ENCODE measurements at regions of chr22 and their contacts with region 1.

Region 1: GRCh38 chr22:37862570-37863325 is 13.5 kb downstream of the EIF3L start:
- DNase-seq: no peak
- ATAC-seq: no peak
- H3K4me3 ChIP-seq: no peak overlapping the region
- H3K27ac ChIP-seq: no peak overlapping the region
- H3K4me1 ChIP-seq: no peaks in the 10 kb centered on the region
- H3K27me3 ChIP-seq: no peaks in the 10 kb centered on the region
- CTCF ChIP-seq: no peak

Region 2: GRCh38 chr22:37726241-37726887 is 136.4 kb before region 1 on chr22:
- CTCF ChIA-PET with region 1: no interaction called
- POLR2A ChIA-PET with region 1: no interaction called
- intact Hi-C with region 1: no loop called
- DNase-seq: no peak
- ATAC-seq: no peak; the same call in 1 of the 2 replicates
- H3K4me3 ChIP-seq: no peak overlapping the region
- H3K27ac ChIP-seq: no peak overlapping the region
- H3K4me1 ChIP-seq: no peaks in the 10 kb centered on the region
- H3K27me3 ChIP-seq: no peaks in the 10 kb centered on the region
- CTCF ChIP-seq: peak; percentile 39; the same call in 1 of the 2 replicates

Region 3: GRCh38 chr22:37768273-37768672 is 94.5 kb before region 1 on chr22:
- CTCF ChIA-PET with region 1: no interaction called
- POLR2A ChIA-PET with region 1: no interaction called
- intact Hi-C with region 1: no loop called
- DNase-seq: no peak
- ATAC-seq: no peak
- H3K4me3 ChIP-seq: no peak overlapping the region
- H3K27ac ChIP-seq: no peak overlapping the region
- H3K4me1 ChIP-seq: no peaks in the 10 kb centered on the region
- H3K27me3 ChIP-seq: no peaks in the 10 kb centered on the region
- CTCF ChIP-seq: peak; percentile 47; the same call in 1 of the 2 replicates

Region 4: DNA sequence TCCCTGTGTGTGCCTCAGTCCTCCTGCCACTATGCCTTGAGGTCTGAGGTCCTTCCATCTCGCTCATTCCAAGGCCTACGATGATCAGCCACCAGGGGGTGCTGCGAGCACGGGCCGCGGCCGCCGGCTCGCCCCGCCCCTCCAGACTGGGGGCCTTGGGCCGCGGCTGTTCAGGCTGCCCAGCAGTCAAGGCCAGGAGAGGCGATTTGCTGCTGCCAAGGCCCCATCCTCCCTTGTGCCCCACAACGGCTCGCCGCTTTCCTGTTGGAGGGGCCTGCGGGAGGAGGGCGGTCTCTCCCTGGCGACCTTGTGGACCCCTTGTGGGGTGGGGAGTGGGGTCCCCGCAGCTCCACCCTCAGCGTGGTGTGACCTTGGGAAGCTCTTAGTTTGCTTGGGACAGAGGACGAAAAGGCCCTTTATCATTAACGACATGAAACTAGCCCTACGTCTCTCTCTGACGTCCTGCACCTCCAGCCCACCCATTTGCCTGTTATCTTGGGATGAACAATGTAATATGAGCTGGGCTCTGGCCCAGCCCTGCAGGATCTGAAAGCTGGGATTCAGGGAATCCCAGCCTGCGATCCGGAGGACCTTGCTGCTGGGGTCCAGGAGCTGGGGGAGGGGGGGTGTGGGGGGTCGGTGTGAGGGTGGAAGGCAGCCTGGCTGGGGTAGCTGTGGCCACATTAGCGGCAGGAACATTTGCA is 44.9 kb before region 1 on chr22:
- CTCF ChIA-PET with region 1: interaction called, 3 read pairs
- POLR2A ChIA-PET with region 1: interaction called, 31 read pairs
- intact Hi-C with region 1: loop called (anchors 1 kb)
- DNase-seq: peak; percentile 75
- ATAC-seq: peak; percentile 77
- H3K4me3 ChIP-seq: no peak overlapping the region
- H3K27ac ChIP-seq: no peak overlapping the region
- H3K4me1 ChIP-seq: no peaks in the 10 kb centered on the region
- H3K27me3 ChIP-seq: no peaks in the 10 kb centered on the region
- CTCF ChIP-seq: peak; percentile 83

Region 5: DNA sequence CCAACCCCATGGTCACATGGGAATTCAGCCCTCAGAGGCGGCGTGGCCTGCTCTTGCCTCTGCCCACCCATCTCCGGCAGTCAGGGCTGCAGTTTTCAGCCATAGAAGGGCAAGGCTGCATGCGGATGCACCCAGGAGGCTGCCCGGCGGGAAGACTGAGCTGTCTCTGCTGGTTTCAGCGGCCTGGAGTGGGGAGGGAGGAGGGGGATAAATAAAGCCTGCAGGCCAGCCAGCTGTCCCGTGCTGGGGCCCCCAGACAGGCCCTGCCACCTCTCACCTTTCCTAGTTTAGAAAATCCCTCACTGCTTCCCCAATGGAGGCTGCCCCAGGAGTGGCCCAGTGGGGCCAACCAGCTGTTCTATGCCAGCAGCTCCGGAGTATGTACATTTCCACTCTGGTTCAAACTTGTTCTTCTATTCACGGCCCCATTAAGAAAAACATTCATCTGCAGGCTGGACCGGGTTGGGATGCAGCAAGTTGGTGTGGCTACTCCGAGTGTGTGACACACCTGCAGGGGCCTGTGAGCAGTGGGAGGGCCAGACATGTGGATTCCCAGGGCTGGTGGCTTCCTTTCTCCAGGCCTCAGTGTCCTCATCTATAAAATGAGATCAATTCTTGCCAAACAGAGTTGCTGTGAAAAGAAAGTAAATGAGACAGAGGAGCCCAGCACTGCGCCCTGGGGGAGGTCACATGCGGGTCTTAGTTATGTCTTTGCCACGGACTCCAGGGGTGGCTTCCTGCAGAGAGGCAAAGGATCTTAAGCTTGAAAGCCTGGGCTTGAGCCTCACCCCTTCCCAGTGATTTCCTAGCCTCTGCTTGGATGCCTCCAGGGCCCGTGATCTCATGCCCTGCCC is 48.4 kb after region 1 on chr22:
- CTCF ChIA-PET with region 1: no interaction called
- POLR2A ChIA-PET with region 1: no interaction called
- intact Hi-C with region 1: no loop called
- DNase-seq: no peak
- ATAC-seq: no peak
- H3K4me3 ChIP-seq: no peak overlapping the region
- H3K27ac ChIP-seq: no peak overlapping the region
- H3K4me1 ChIP-seq: peaks cover 10% of the 10 kb centered on the region; the same call in 1 of the 2 replicates
- H3K27me3 ChIP-seq: no peaks in the 10 kb centered on the region
- CTCF ChIP-seq: no peak

Measured in PC-3 (cell line).